Dorsolateral prefrontal cortex (tissue), 120 donors: ENCODE measurements at regions of chr7 and their contacts with region 1.

Region 1: DNA sequence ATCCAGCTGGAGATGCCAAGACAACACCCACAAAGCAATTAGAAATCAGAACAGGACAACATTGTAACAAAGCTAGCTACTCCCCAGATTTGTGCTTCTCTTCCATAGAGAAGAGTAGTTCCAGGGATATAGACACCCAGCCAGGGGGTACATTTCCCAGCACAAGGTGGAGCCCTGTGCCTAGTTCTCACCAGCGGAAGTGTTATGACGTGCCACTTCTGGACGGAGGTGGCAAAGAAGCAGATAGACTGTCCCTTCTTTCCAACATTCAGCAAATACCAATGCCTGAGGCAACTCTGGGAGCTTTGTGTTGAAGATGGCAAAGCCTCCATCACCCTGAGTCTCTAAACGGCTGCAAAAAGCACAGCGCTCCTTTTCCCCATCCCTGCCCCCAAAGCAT is 23.4 kb upstream of the GSAP start:
- DNase-seq: peak in 9 of 10 donors; percentile 46 to 83 (median 60)
- H3K4me3 ChIP-seq: peak overlapping the region in 11 of 59 donors; percentile 9 to 42 (median 28)
- H3K27ac ChIP-seq: peak overlapping the region in 4 of 59 donors; percentile 18 to 39 (median 32)
- H3K27me3 ChIP-seq: no peaks in the 10 kb centered on the region
- CTCF ChIP-seq: peak in 55 of 56 donors; percentile 31 to 81 (median 58)

Region 2: DNA sequence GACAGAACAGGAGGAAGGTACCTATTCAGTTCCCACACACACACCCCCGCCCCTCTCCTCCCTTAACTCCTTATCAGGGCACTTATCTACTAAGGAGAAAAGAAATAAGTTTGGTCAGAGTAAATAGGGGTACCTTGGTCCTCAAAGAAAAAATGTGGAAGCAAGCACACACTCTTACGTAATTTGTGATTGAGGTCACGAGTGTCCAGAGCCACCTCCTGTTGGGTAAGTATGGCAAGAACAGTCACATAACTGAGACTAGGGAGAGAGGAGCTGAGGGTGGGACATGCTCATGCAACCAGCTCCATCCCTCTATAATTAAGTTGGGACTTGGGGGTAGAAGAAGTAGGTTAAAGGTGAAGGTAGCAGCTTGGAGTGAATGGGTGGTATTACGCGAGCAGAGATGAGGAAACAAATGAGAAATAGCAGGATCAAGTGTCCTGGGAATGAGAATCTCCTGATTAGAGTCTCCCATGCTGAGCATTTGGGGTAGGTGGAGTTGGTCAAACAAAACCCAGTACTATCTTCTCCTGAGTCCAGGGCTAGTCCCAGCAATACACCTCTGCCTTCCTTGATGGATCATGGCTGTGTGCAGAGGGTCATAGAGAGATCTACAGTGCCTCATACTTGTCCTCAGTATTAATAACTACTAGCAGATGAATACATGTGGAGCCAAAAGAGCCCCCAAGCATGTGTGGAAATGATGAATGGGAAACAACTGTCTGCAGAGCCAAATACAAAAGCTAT is 100.5 kb before region 1 on chr7:
- intact Hi-C with region 1: no loop called
- DNase-seq: no peak
- H3K4me3 ChIP-seq: no peak overlapping the region
- H3K27ac ChIP-seq: no peak overlapping the region
- H3K27me3 ChIP-seq: no peaks in the 10 kb centered on the region
- CTCF ChIP-seq: no peak

Region 3: DNA sequence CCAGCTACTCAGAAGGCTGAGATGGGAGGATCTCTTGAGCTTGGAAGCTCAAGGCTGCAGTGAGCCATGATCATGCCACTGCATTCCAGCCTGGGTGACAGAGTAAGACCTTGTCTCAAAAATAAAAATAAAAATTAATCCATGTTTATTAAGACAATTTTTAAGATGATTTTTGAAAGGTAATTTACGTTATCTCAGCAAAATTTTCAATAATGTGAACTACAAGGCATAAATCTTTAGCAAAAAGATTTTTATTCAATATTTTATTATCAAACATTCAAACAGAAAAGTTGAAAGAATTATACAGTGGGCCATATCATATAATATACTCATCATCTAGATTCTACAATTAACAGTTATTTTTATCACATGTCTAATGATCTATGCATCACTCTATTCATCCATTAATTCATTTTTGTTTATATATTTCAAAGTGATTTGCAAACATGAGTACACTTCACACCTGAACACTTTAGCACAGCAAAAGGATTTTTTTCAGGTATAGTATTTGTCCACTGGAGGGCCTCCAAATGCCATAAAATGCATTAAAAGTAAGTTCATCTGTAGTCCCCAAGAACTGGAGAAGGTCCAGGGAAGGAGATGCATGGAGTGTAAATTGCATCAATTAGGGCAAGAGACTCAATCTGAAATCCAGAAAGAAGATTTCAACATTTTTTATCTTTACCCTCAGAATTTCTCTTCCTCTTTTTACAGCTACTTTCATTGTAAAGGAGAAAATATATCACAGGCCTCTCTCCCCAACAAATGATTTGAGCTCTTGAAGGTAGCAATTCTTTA is 218.1 kb after region 1 on chr7:
- intact Hi-C with region 1: loop called in 1 of 2 experiments (anchors 10 kb)
- DNase-seq: peak in 1 of 10 donors; percentile 23
- H3K4me3 ChIP-seq: no peak overlapping the region
- H3K27ac ChIP-seq: no peak overlapping the region
- H3K27me3 ChIP-seq: no peaks in the 10 kb centered on the region
- CTCF ChIP-seq: peak; percentile 13 to 78 (median 54)